ENCODE measurements at regions of chr5 and their contacts with region 1.

Region 1: DNA sequence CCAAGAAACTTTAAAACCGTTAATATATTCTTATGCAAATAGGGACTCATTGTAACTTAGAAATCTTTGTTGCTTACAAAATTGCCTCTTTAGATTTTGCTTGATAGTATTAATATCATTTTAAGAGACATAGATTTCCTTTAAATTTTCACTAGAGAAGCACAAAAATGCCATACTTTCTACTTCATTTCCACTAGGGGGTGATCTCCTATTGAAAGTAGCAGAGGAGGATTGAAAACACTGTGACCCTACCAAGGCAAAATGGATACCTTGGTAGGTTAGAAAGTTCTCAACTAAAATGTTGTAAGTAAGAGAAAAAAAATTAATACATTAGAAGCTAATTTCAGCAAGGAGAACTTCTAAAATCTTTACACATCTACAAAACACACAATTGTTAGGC is 204.9 kb downstream of the CHSY3 start:
- DNase-seq: no peak
- H3K4me3 ChIP-seq: no peak overlapping the region
- H3K27ac ChIP-seq: no peak overlapping the region
- H3K4me1 ChIP-seq: no peaks in the 10 kb centered on the region
- H3K27me3 ChIP-seq: no peaks in the 10 kb centered on the region
- CTCF ChIP-seq: peak; percentile 20 to 54 (median 52)

Region 2: DNA sequence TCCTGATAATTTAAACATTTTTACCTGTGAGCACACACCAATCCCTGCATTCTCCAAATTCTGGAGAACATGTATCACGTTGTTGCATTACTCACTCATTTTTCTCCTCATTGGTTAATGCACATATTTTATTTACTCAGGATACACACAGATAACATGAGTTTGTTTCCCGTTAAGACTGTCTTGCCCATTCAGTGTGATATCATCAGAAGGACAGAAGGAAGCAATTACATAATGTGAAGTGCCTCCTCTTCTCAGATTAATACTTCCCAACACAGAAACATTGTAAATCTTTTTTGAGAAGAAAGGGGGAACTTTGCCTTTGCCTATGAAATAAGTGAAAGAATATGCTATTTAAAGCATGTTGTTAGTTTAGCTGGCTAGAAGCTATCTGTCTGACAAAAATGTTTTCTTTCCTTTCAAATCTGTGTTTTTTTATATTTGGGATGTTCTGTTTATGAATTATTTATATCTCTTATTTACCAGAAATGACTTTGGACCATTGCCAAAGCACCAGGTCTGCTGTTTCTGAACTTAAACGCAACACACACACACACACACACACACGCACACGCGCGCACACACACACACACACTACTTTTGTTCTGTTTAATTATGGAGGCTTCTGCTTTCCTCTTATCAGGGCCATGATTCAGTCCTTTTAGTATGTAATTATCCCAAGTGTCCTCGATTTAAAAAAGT is 18.4 kb before region 1 on chr5:
- intact Hi-C with region 1: no loop called
- DNase-seq: no peak
- H3K4me3 ChIP-seq: no peak overlapping the region
- H3K27ac ChIP-seq: no peak overlapping the region
- H3K4me1 ChIP-seq: no peaks in the 10 kb centered on the region
- H3K27me3 ChIP-seq: no peaks in the 10 kb centered on the region
- CTCF ChIP-seq: no peak

Region 3: DNA sequence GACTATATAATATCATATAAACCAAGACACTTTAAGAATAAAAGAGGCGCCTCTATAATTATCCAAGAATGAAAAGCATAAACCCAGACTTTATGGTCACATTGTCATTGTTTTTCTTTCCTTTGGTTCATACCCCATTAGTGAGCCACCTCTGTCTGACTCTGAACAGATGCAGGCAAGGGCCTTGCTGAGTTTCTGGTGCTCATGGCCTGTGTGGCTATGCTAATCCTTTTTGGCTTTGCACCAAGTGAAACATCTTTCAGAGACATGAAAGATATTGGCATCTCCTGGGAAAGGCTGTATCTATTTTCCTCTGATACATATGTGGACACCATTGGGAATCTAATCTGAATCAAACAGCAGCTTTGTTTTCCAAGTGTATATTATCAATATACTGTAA is 17.6 kb after region 1 on chr5:
- intact Hi-C with region 1: no loop called
- DNase-seq: no peak
- H3K4me3 ChIP-seq: no peak overlapping the region
- H3K27ac ChIP-seq: peak overlapping the region in 1 of 2 donors; percentile 19
- H3K4me1 ChIP-seq: peaks cover 0 to 5% of the 10 kb centered on the region in 2 donors
- H3K27me3 ChIP-seq: no peaks in the 10 kb centered on the region
- CTCF ChIP-seq: no peak

Region 4: DNA sequence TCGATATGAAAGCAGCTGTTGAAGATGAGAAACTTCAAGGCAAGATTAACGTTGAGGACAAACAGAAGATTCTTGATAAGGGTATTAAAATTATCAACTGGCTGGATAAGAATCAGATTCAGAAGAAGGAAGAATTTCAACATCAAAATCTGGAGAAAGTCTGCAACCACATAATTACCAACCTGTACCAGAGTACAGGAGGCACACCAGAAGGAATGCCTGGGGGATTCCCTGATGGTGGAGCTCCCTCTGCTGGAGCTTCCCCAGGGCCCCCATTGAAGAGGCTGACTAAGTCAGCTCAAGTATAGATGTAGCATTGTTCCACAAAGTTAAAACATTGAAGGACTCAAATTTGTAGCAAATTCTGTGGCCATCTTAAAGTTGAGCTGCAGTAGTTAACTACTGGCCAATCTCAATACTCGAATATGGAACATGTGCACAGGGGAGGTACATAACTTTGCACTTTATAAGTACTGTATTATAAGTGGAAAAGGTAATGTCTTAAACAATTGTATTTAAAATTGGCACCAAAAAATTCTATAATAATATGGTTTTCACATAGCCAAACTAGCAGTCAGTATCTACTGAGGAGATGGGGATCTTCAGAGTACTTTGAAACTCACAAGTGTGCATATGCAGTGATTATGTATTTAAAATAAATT is 32.6 kb after region 1 on chr5:
- intact Hi-C with region 1: loop called (anchors 2 kb)
- DNase-seq: no peak
- H3K4me3 ChIP-seq: no peak overlapping the region
- H3K27ac ChIP-seq: no peak overlapping the region
- H3K4me1 ChIP-seq: peaks cover 4 to 15% of the 10 kb centered on the region in 2 donors
- H3K27me3 ChIP-seq: no peaks in the 10 kb centered on the region
- CTCF ChIP-seq: peak in 2 of 3 experiments; percentile 26 to 39

Region 5: GRCh38 chr5:130605234-130605633 is 496.1 kb after region 1 on chr5:
- intact Hi-C with region 1: no loop called
- DNase-seq: no peak
- H3K4me3 ChIP-seq: no peak overlapping the region
- H3K27ac ChIP-seq: no peak overlapping the region
- H3K4me1 ChIP-seq: no peaks in the 10 kb centered on the region
- H3K27me3 ChIP-seq: no peaks in the 10 kb centered on the region
- CTCF ChIP-seq: no peak